PC-3 (cell line): ENCODE measurements at regions of chr3 and their contacts with region 1.

Region 1: DNA sequence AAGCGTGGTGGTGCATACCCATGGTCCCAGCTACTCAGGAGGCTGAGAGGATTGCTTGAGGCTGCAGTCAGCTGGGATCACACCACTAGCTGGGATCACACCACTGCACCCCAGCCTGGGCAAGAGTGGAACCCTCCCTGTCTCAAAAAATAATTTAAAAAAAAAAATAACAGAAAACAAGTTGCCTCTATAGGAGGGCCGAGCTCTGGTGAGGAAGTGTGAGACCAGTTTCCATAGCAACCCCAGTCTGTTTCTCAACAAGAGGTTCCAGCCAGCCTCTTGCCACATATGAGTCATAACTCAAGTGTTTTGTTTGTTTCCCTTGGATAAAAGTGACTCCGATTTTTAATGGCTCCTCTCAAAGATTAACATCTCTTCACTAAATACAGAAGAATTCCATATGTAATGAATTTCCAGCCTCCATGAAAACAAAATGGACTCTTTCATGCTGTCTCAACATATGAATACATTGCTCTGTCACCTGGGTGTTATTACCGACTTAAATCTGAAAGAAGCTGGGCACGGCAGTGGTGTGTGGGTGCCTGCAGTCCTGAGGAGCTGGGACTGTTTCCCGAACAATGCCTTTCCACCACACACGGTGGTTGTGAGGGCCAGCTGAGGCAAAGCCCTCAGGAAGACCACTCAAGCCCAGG is 19.7 kb downstream of the TMEM43 start:
- DNase-seq: peak; percentile 98
- ATAC-seq: peak; percentile 75
- H3K4me3 ChIP-seq: peak overlapping the region; percentile 17; the same call in 1 of the 2 replicates
- H3K27ac ChIP-seq: peak overlapping the region; percentile 94
- H3K4me1 ChIP-seq: peaks cover 32% of the 10 kb centered on the region
- H3K27me3 ChIP-seq: no peaks in the 10 kb centered on the region
- CTCF ChIP-seq: no peak

Region 2: GRCh38 chr3:14170531-14171173 is 26.1 kb after region 1 on chr3:
- CTCF ChIA-PET with region 1: interaction called, 3 read pairs
- POLR2A ChIA-PET with region 1: interaction called, 4 read pairs
- intact Hi-C with region 1: loop called (anchors 1 kb)
- DNase-seq: peak; percentile 53
- ATAC-seq: peak; percentile 85
- H3K4me3 ChIP-seq: no peak overlapping the region
- H3K27ac ChIP-seq: no peak overlapping the region
- H3K4me1 ChIP-seq: peaks cover 15% of the 10 kb centered on the region; the same call in 1 of the 2 replicates
- H3K27me3 ChIP-seq: no peaks in the 10 kb centered on the region
- CTCF ChIP-seq: no peak

Region 3: DNA sequence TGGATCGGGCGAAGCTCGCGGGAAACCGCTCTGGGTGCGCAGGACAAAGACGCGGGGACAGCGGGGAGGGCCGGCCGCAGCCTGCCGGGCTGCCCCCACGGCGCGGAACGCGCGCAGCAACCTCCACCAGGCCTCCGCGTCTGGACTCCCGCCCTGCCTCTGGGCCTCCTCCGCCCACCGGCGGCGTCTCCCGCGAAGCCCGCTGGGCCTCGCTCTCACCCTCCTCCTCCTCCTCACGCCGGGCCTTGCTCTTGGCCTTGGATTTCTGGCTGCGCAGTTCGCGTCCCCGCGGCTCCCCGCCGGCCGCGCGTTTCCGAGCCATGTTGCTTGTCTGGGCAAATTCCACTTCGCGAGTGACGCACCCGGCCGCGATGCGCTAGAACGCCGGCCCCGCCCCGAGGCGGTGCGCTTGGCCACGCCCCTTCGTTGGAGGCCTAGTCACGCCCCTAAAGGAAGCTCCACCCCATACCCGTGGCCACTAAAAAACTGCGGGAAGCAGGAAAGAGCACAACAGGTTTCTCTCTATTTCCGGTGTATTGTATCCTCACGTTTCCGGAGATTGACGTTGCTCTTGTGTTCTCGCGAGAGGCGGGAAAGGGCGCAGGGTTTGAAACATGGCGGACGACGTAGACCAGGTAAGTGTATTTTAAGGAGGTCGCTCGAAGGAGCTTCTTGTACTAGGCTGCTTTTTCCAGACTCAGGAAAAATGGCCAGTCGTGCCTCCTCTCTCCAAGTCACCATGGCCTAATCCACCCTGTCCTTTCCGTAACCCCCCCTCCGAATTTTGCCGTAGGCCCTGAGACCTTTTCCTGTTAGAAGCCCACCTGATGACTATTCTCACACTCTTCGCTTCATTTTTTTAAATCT is 33.9 kb after region 1 on chr3 and contains the starts of genes LSM3 and XPC:
- CTCF ChIA-PET with region 1: no interaction called
- POLR2A ChIA-PET with region 1: interaction called, 5 read pairs
- intact Hi-C with region 1: loop called (anchors 2 kb)
- DNase-seq: peak; percentile 99
- ATAC-seq: peak; percentile 95
- H3K4me3 ChIP-seq: peak within 1 kb of the TSS; percentile 74
- H3K27ac ChIP-seq: peak within 1 kb of the TSS; percentile 39
- H3K4me1 ChIP-seq: peaks cover 31% of the 10 kb centered on the region
- H3K27me3 ChIP-seq: no peaks in the 10 kb centered on the region
- CTCF ChIP-seq: no peak
- total RNA-seq, gene LSM3: 22.0 and 27.2 TPM in 2 replicates
- total RNA-seq, gene XPC: 24.3 and 26.1 TPM in 2 replicates